ENCODE measurements at regions of chr3 and their contacts with region 1.

Region 1: DNA sequence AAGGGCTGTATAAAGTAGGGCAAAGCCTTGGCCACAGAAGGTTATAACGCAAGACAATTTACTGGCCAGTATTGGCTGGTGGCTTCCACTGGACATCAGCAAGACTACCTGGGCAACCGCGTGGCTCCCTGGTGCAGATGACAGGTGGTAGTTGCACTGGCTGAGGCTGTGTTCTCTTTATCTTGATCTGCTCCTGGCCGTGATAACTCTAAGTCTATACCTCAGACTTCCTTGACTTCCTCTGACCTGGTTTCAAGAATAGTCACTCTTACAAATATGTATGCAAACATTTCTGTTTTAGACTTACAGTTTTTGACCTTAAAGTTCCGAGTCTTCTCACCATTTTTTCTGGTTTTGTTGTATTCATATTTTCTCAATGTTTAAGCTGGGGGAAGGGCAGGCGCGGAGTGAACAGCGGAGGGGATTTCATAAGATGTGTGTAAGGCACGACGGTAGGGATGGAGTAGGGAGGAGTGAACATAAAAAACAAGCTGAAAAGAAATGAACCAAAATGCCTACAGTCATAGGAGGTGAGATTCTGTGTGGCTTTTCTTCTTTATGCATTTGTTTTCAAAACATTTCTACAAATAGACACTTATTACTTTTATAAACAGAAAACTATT is 15.2 kb upstream of the TMEM212 start:
- DNase-seq: no peak
- ATAC-seq: no peak

Region 2: DNA sequence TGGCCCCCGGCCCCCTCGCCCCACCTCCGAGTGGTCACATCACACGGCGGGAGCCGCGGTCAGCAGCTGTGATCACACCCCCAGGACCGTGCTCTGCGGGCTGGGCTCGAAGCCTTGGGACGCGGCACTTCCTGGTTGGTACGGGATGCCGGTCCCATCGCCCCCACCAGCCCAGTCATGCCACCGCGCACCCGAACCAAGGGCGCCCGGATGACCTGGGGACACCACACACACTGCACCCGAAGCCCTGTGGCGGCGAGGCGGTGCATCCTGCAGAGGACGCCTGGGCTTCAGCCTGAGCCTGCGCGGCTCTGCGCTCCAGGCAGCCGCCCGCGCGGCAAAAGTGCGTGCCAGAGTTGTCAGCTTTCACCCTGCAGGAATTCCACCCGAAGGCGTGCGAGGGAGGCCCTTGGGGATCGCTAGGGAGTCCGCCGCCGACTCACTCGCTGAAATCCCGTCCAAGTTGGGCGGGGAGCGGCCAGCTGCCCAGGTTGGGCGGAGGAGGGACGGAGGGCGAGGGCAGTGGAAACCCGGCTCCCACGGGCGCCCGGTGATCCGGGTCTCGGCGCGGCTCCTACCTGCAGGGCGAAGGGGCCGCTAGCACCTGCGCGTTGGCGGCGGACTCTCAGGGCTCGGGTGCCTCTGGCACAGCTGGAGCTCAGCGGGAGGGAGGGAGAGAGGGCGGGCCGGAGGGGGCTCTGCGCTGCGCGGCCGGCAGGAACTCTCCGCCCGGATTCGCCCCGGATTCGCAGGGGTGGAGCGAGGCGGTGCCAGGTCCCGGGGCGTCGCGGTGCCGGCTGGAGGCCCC is 17.9 kb before region 1 on chr3 and contains the start of gene PLD1:
- intact Hi-C with region 1: loop called (anchors 2 kb)
- DNase-seq: peak; percentile 91
- ATAC-seq: peak; percentile 79
- total RNA-seq, gene PLD1: 36.8 TPM

Measured in sciatic nerve (tissue), 2 donors.